ENCODE measurements at regions of chr20 and their contacts with region 1.

Region 1: GRCh38 chr20:5126512-5127203 is at the start of gene CDS2:
- DNase-seq: peak; percentile 99 to 100 (median 100)
- H3K4me3 ChIP-seq: peak within 1 kb of the TSS; percentile 84
- H3K4me3 Mint-ChIP-seq: peak within 1 kb of the TSS; percentile 81 to 98 (median 94)
- H3K27ac ChIP-seq: peak within 1 kb of the TSS; percentile 99
- H3K27ac Mint-ChIP-seq: peak within 1 kb of the TSS; percentile 84 to 99 (median 97)
- H3K4me1 ChIP-seq: peaks cover 26% of the 10 kb centered on the region
- H3K4me1 Mint-ChIP-seq: peaks cover 27 to 42% (median 34%) of the 10 kb centered on the region in 3 donors
- H3K27me3 ChIP-seq: no peaks in the 10 kb centered on the region
- H3K27me3 Mint-ChIP-seq: no peaks in the 10 kb centered on the region
- total RNA-seq, gene CDS2: 55.3 to 57.3 TPM

Region 2: GRCh38 chr20:5090191-5090590 is 36.5 kb before region 1 on chr20:
- CTCF ChIA-PET with region 1: no interaction called
- POLR2A ChIA-PET with region 1: no interaction called
- DNase-seq: peak in 1 of 5 donors; percentile 9
- H3K4me3 ChIP-seq: no peak overlapping the region
- H3K4me3 Mint-ChIP-seq: peak overlapping the region in 4 of 7 donors; percentile 3 to 70 (median 7)
- H3K27ac ChIP-seq: no peak overlapping the region
- H3K27ac Mint-ChIP-seq: peak overlapping the region; percentile 35 to 98 (median 84)
- H3K4me1 ChIP-seq: peaks cover 8% of the 10 kb centered on the region
- H3K4me1 Mint-ChIP-seq: peaks cover 11 to 15% (median 13%) of the 10 kb centered on the region in 3 donors
- H3K27me3 ChIP-seq: no peaks in the 10 kb centered on the region
- H3K27me3 Mint-ChIP-seq: no peaks in the 10 kb centered on the region

Region 3: DNA sequence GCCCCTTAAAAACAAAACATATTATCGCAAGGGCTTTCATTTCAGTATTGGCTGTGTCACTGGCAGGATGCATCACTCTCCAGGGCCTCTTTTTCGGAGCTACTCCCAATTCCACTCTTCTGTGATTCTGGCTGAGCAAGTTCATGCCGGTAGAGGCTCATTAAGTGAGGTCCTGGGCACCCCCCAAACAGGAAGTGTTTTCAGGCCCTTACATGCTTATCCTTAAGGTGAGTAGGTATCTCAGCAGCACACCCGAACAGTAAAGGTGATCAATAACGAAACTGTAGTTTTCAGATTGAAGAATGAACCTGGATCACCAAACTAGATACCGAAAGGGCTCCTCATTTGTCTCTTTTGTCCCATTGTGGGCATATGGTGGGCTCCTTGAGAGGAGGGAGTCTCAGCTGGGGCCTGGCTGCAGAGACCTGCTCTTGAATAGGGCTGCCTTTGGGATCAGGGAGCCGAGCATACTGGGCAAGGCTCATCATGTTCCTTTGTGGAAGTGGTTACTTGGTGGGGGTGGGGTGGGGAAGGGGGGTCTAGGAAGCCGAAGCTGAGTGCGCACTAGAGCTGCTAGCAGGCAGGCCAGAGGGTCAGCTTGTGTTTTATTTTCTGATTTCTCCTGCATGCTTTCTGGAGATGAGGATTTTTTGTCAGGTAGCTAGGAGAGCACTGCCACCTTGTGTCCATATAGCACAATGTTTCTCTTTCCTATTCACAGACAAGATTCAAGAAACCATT is 65.3 kb after region 1 on chr20:
- CTCF ChIA-PET with region 1: interaction called, 37 read pairs
- POLR2A ChIA-PET with region 1: interaction called, 15 read pairs
- DNase-seq: peak in 4 of 5 donors; percentile 8 to 57 (median 46)
- H3K4me3 ChIP-seq: no peak overlapping the region
- H3K4me3 Mint-ChIP-seq: no peak overlapping the region
- H3K27ac ChIP-seq: no peak overlapping the region
- H3K27ac Mint-ChIP-seq: peak overlapping the region; percentile 15 to 89 (median 80)
- H3K4me1 ChIP-seq: no peaks in the 10 kb centered on the region
- H3K4me1 Mint-ChIP-seq: peaks cover 5 to 6% (median 6%) of the 10 kb centered on the region in 3 donors
- H3K27me3 ChIP-seq: no peaks in the 10 kb centered on the region
- H3K27me3 Mint-ChIP-seq: no peaks in the 10 kb centered on the region

Region 4: DNA sequence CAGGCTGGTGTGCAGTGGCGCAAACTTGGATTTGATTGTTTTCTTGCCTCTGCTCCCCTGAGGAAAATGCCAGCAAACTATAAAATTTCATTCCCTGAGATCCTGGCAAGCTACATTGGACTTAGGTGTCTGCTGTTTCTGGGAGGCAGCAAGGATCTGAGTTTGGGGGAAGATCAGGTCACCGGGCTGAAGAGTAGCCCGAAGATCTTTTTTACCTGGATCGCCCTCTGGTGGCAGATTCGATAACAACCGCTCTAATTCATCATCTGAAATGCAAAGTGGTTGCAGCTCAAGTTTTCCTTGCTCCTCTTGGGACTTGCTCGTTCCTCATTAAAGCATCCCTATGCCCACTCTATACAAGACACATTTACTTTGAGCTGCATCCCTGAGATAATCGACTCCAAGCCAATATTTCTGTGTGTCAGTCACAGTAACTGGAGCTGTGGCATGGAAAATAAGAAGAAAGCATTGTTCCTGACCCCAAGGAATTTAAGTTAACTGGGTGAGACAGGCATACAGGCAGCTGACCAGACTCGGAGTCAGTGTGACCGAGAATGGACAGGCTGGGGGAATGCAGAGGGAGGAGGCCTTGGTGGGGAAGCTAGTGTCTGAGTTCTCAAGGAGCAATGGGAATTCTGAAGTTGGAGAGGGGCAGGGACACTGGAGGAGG is 321.9 kb after region 1 on chr20:
- CTCF ChIA-PET with region 1: interaction called, 13 read pairs
- POLR2A ChIA-PET with region 1: interaction called, 3 read pairs
- DNase-seq: peak; percentile 3 to 55 (median 22)
- H3K4me3 ChIP-seq: no peak overlapping the region
- H3K4me3 Mint-ChIP-seq: no peak overlapping the region
- H3K27ac ChIP-seq: no peak overlapping the region
- H3K27ac Mint-ChIP-seq: no peak overlapping the region
- H3K4me1 ChIP-seq: no peaks in the 10 kb centered on the region
- H3K4me1 Mint-ChIP-seq: no peaks in the 10 kb centered on the region
- H3K27me3 ChIP-seq: no peaks in the 10 kb centered on the region
- H3K27me3 Mint-ChIP-seq: peaks cover 12 to 44% of the 10 kb centered on the region in 2 donors